ENCODE measurements at regions of chr6 and their contacts with region 1.

Region 1: GRCh38 chr6:26421259-26422144 is 18.8 kb upstream of the BTN3A3 start:
- DNase-seq: peak; percentile 38
- ATAC-seq: peak; percentile 95
- H3K4me3 Mint-ChIP-seq: no peak overlapping the region
- H3K27ac Mint-ChIP-seq: peak overlapping the region; percentile 56
- H3K4me1 Mint-ChIP-seq: peaks cover 5% of the 10 kb centered on the region
- H3K27me3 Mint-ChIP-seq: no peaks in the 10 kb centered on the region
- CTCF ChIP-seq: no peak

Region 2: GRCh38 chr6:26342106-26343004 is 79.1 kb before region 1 on chr6:
- CTCF ChIA-PET with region 1: interaction called, 6 read pairs
- POLR2A ChIA-PET with region 1: no interaction called
- intact Hi-C with region 1: loop called (anchors 2 kb)
- DNase-seq: no peak
- ATAC-seq: no peak
- H3K4me3 Mint-ChIP-seq: no peak overlapping the region
- H3K27ac Mint-ChIP-seq: no peak overlapping the region
- H3K4me1 Mint-ChIP-seq: peaks cover 9% of the 10 kb centered on the region
- H3K27me3 Mint-ChIP-seq: peaks cover 40% of the 10 kb centered on the region
- CTCF ChIP-seq: no peak

Region 3: GRCh38 chr6:26383624-26384417 is 37.7 kb before region 1 on chr6:
- CTCF ChIA-PET with region 1: no interaction called
- POLR2A ChIA-PET with region 1: interaction called, 3 read pairs
- intact Hi-C with region 1: loop called (anchors 5 kb)
- DNase-seq: no peak
- ATAC-seq: peak; percentile 16
- H3K4me3 Mint-ChIP-seq: peak overlapping the region; percentile 97
- H3K27ac Mint-ChIP-seq: peak overlapping the region; percentile 94
- H3K4me1 Mint-ChIP-seq: peaks cover 66% of the 10 kb centered on the region
- H3K27me3 Mint-ChIP-seq: no peaks in the 10 kb centered on the region
- CTCF ChIP-seq: no peak

Region 4: GRCh38 chr6:26401987-26402658 is 19.4 kb before region 1 on chr6 and contains the start of gene BTN3A1:
- CTCF ChIA-PET with region 1: no interaction called
- POLR2A ChIA-PET with region 1: no interaction called
- intact Hi-C with region 1: loop called (anchors 1 kb)
- DNase-seq: peak; percentile 43
- ATAC-seq: peak; percentile 87
- H3K4me3 Mint-ChIP-seq: peak within 1 kb of the TSS; percentile 98
- H3K27ac Mint-ChIP-seq: peak within 1 kb of the TSS; percentile 98
- H3K4me1 Mint-ChIP-seq: peaks cover 65% of the 10 kb centered on the region
- H3K27me3 Mint-ChIP-seq: no peaks in the 10 kb centered on the region
- CTCF ChIP-seq: no peak
- total RNA-seq, gene BTN3A1: 55.4 and 61.7 TPM in 2 replicates

Region 5: GRCh38 chr6:26439657-26440056 is 18.2 kb after region 1 on chr6:
- CTCF ChIA-PET with region 1: no interaction called
- POLR2A ChIA-PET with region 1: no interaction called
- intact Hi-C with region 1: loop called (anchors 2 kb)
- DNase-seq: no peak
- ATAC-seq: no peak
- H3K4me3 Mint-ChIP-seq: peak overlapping the region; percentile 92
- H3K27ac Mint-ChIP-seq: peak overlapping the region; percentile 90
- H3K4me1 Mint-ChIP-seq: peaks cover 40% of the 10 kb centered on the region
- H3K27me3 Mint-ChIP-seq: no peaks in the 10 kb centered on the region
- CTCF ChIP-seq: no peak